A549 (cell line): ENCODE measurements at regions of chr2 and their contacts with region 1.

Region 1: DNA sequence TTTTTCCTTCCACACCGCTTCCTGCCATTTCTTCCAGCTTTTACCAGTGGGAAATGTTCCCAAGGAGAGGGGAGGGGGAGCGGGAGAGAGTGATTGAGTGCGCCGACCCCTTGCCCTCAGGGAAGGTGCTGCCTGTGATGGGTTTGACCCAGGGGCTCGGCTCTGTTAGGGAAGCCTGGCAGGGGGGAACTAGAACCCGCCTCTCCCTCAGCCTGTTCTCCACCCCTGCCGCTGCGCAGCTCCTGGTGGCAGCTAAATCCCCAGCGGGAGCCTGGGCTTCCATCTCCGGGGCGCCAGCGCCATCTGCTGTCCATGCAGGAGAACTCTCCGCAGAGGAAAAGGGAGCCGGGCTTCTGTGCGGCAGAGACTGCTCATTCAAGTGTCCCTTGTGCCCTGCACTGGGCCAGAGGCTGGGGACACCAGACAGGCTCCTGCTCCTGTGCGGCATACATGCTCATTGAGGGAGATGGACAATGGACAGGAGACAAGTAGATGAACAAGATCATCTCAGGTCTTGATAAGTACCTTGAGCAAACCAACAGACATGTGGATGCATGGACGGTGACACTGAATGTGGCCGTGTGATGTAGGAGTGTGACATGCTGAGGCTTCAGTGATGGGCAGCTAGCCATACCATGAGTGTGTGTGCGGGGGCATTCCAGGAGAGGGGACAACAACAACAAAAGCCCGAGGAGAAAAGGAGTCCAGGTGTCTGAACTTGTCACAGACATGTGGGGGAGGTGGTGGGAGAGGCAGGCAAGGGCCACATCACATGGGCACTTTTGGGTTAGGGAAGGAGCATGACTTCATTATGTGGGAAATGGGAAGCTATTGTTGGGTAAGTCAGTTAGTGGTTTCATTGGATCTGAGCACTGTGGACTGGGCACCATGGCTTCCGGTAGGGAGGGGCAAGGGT is 13.3 kb downstream of the CHPF start:
- DNase-seq: peak; percentile 81 to 94
- ATAC-seq: peak; percentile 71 to 93
- H3K4me3 ChIP-seq: peak overlapping the region; percentile 33; the same call in 2 of the 3 replicates
- H3K27ac ChIP-seq: peak overlapping the region in 1 of 2 experiments; percentile 57; a peak in 1 of 6 replicates
- H3K4me1 ChIP-seq: peaks cover 4% of the 10 kb centered on the region; the same call in 1 of the 3 replicates
- CTCF ChIP-seq: peak; percentile 94
- EP300 ChIP-seq: no peak
- POLR2A ChIP-seq: no peak
- RAD21 ChIP-seq: peak; percentile 99

Region 2: DNA sequence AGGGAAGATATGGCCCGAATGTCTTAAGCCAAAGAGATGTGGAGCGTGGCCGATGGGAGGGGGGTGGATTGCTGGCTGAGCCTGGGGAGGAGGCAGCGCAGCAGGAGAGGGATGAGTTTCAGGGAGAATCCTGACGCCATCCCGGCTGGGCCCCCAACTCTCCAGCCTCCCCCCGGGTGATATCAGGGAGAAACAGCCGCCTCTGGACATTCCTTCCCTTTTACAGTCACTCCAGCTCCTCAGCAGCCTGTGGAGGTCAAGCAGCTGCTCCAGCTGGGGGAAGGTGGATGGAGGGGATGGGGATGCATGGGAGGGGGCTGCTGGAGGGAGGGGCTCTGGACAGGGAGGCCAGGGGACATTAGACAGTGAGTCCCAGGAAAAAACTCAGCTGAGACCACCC is 121.7 kb before region 1 on chr2:
- CTCF ChIA-PET with region 1: interaction called, 362 read pairs
- POLR2A ChIA-PET with region 1: interaction called, 3 read pairs
- DNase-seq: no peak
- ATAC-seq: no peak
- H3K4me3 ChIP-seq: no peak overlapping the region
- H3K27ac ChIP-seq: no peak overlapping the region
- H3K4me1 ChIP-seq: peaks cover 12% of the 10 kb centered on the region; the same call in 2 of the 3 replicates
- CTCF ChIP-seq: no peak
- EP300 ChIP-seq: no peak
- POLR2A ChIP-seq: no peak
- RAD21 ChIP-seq: no peak

Region 3: DNA sequence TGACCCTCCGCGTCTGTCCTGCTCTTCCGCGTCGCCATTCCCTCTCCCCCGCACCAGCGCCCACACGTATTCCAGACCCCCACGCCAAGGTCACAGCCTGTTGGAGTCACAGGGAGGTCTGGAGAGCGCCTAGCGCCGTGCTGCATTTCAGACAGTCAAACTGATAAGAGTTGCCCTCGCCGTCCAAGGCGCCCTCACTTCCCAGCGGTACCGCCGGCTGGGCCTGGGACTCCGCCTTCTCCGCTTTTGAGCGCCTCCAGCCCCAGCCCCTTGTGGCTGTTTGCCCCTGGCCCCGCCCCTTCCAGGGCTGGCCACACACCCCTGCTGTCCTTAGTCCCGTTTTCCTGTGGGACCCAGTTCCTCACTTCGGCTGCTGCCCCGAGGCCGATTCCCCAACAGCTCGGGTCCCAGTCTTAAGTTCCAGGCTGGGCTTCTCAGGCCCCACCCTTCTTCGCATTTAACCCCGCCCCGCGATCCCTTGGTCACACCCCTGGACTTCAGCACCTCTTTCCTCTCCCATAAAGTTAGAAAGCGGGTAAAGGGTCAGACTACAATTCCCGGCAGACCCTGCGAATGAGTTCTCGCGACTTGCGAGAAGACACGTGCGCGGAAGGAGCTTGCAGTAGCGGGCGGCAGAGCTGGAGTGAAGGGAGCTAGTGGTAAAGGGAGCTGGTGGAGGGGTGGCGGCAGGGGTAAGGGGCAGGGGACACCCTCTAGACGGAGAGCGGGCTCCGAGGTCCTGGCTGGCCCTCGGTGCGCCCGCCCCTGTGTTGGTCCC is 31.8 kb before region 1 on chr2 and contains the start of gene GMPPA:
- CTCF ChIA-PET with region 1: interaction called, 3,291 read pairs
- POLR2A ChIA-PET with region 1: interaction called, 6 read pairs
- DNase-seq: peak; percentile 98 to 99
- ATAC-seq: peak; percentile 81 to 90
- H3K4me3 ChIP-seq: peak within 1 kb of the TSS; percentile 75
- H3K27ac ChIP-seq: peak within 1 kb of the TSS; percentile 84 to 91
- H3K4me1 ChIP-seq: peaks cover 22% of the 10 kb centered on the region; the same call in 2 of the 3 replicates
- CTCF ChIP-seq: no peak
- EP300 ChIP-seq: no peak
- POLR2A ChIP-seq: peak; percentile 89
- RAD21 ChIP-seq: no peak
- polyA plus RNA-seq, gene GMPPA: 46.2 and 55.3 TPM in 2 replicates

Region 4: DNA sequence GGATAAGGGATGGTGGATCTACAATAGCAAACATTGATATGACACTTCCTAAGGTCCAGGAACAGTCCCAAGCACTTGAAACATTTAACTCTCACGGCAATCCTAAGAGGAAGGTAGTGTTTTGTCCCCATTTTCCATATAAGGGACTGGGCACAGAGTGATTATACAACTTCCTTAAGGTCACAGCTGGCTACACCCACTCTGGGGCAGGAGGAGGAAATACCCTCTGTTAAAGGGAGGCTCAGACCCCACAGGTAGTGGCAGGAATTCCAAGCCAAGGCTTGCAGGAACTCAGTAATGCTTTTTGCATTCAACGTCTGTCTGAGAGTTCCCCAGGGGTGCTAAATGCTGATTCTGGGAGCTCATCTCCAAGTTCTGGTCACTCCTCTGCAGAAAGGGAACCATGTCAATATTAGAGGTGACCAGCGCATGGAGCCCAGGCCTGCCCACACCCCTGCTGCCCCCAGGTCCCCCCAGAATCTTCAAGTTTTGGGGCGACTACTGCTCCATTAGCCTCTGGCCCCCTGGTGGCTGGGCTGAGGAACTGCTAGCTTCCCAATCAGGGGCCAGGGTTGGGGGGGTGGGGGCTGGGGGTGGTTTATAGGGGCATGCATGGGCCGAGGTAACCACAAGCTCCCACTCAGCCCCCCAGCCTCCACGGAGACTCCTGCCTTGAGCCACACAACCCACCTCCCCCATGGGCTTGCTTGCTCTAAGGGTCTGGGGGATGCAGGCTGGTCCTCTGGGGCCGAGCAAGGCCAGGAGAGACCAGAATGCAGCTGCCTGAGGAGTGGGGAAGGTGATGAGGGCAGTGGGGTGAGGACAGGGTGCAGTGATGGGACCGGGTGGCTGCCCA is 30.0 kb after region 1 on chr2:
- CTCF ChIA-PET with region 1: interaction called, 16 read pairs
- POLR2A ChIA-PET with region 1: no interaction called
- DNase-seq: peak in 1 of 2 experiments; percentile 47
- ATAC-seq: peak; percentile 12 to 66; a peak in 4 of 6 replicates
- H3K4me3 ChIP-seq: no peak overlapping the region
- H3K27ac ChIP-seq: no peak overlapping the region
- H3K4me1 ChIP-seq: no peaks in the 10 kb centered on the region
- CTCF ChIP-seq: peak; percentile 63
- EP300 ChIP-seq: no peak
- POLR2A ChIP-seq: no peak
- RAD21 ChIP-seq: no peak